Activated CD4-positive, alpha-beta T cell treated with anti-CD3 and anti-CD28 coated beads for 36 hours (primary cell): ENCODE measurements at regions of chr5 and their contacts with region 1.

Region 1: DNA sequence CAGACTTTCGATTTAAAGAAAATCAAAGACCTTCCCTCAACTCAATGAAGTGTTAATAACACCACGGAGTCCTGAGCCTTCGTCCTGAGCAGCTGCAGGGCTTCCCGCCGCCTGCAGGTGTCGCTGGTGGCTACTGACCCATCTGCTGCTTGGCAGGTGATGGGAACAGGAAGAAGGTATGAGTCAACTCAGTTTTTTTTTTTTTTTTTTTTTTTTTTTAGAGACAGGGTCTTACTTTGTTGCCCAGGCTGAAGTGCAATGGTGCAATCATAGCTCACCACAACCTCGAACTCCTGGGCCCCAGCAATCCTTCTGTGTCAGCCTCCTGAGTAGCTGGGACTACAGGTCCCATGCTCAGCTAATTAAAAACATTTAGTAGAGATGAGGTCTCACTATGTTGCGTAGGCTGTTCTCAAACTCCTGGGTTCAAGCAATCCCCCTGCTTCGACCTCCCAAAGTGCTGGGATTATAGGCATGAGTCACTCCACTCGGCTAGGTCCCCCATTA is 185.7 kb upstream of the IL12B start:
- DNase-seq: peak; percentile 89
- ATAC-seq: peak; percentile 98
- H3K4me3 Mint-ChIP-seq: no peak overlapping the region
- H3K27ac Mint-ChIP-seq: no peak overlapping the region
- H3K4me1 Mint-ChIP-seq: peaks cover 9% of the 10 kb centered on the region
- H3K27me3 Mint-ChIP-seq: peaks cover 10% of the 10 kb centered on the region

Region 2: DNA sequence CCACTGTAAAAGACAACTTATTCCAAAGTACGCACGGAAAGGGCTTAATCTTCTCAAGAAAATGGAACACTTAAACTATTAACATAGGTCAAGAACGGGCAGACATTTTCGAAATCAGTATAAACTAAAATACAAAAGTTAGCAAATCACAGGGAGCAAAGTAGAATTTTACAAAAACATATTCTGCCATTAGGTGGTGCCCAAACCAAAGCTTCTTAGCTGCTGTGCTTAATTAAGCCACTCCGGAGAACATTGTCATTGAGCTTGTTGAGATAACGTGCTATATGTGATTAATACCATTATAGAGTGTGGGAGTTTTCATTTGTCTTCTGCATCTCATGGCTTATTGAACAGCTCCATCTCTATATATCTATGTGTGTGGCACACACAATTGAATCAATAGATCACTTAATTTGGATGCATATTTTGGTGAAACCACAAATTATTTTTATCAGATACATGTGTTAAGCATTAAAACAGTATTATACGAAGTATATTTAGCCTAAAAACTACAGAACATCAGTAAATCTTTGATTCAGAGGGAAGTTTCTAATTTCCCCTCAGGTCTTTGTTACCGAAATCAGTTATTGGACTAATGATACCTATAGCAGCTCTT is 229.4 kb before region 1 on chr5:
- CTCF ChIA-PET with region 1: interaction called, 3 read pairs
- POLR2A ChIA-PET with region 1: no interaction called
- intact Hi-C with region 1: loop called in 1 of 2 experiments (anchors 5 kb)
- DNase-seq: no peak
- ATAC-seq: peak; percentile 63
- H3K4me3 Mint-ChIP-seq: no peak overlapping the region
- H3K27ac Mint-ChIP-seq: no peak overlapping the region
- H3K4me1 Mint-ChIP-seq: no peaks in the 10 kb centered on the region
- H3K27me3 Mint-ChIP-seq: no peaks in the 10 kb centered on the region

Region 3: GRCh38 chr5:159331093-159331973 is 184.6 kb before region 1 on chr5:
- CTCF ChIA-PET with region 1: interaction called, 5 read pairs
- POLR2A ChIA-PET with region 1: no interaction called
- intact Hi-C with region 1: loop called in 1 of 2 experiments (anchors 5 kb)
- DNase-seq: peak; percentile 86
- ATAC-seq: peak; percentile 96
- H3K4me3 Mint-ChIP-seq: peak overlapping the region; percentile 62
- H3K27ac Mint-ChIP-seq: peak overlapping the region; percentile 76
- H3K4me1 Mint-ChIP-seq: peaks cover 15% of the 10 kb centered on the region
- H3K27me3 Mint-ChIP-seq: peaks cover 2% of the 10 kb centered on the region

Region 4: DNA sequence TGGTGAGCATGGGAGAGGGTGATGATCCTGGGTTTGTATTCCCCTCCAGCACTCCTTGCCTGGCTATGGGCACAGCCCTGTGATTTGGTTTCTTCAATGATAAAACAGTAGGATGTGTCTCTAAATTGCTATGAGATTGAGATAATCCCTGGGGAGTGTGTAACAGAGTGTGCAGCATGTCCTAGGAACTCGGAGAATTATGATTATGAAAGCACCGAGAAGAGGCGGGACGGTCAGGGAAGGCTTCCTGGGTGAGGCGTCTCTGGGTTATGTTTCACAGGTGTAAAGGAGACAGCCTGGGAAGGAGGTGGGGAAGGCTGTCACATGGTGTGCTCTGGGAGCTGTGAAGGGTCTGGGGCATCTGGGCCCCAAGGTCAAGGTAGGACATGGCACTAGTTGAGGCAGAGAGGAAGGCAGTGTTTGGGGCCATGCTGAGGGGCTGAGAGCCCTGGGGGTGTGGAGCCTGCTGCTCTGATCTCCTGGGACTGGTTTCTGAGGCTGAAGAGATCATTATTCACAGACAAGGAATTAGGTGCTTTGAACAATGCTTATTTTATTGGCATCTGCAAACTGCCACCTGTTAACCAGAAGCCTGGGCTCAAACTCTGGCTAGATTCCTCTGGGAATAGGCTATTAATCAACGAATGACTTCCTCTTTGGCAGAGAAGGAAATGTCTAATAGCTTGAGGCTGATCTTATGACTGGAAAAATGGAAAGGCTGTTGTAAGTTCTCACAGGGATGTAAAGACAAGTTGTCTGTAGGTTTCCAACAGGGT is 111.9 kb before region 1 on chr5:
- CTCF ChIA-PET with region 1: no interaction called
- POLR2A ChIA-PET with region 1: no interaction called
- intact Hi-C with region 1: no loop called
- DNase-seq: no peak
- ATAC-seq: no peak
- H3K4me3 Mint-ChIP-seq: no peak overlapping the region
- H3K27ac Mint-ChIP-seq: no peak overlapping the region
- H3K4me1 Mint-ChIP-seq: peaks cover 3% of the 10 kb centered on the region
- H3K27me3 Mint-ChIP-seq: peaks cover 31% of the 10 kb centered on the region

Region 5: GRCh38 chr5:159444441-159445082 is 71.4 kb before region 1 on chr5:
- CTCF ChIA-PET with region 1: interaction called, 3 read pairs
- POLR2A ChIA-PET with region 1: no interaction called
- intact Hi-C with region 1: loop called in 1 of 2 experiments (anchors 2 kb)
- DNase-seq: no peak
- ATAC-seq: peak; percentile 58
- H3K4me3 Mint-ChIP-seq: no peak overlapping the region
- H3K27ac Mint-ChIP-seq: no peak overlapping the region
- H3K4me1 Mint-ChIP-seq: no peaks in the 10 kb centered on the region
- H3K27me3 Mint-ChIP-seq: peaks cover 15% of the 10 kb centered on the region

Region 6: DNA sequence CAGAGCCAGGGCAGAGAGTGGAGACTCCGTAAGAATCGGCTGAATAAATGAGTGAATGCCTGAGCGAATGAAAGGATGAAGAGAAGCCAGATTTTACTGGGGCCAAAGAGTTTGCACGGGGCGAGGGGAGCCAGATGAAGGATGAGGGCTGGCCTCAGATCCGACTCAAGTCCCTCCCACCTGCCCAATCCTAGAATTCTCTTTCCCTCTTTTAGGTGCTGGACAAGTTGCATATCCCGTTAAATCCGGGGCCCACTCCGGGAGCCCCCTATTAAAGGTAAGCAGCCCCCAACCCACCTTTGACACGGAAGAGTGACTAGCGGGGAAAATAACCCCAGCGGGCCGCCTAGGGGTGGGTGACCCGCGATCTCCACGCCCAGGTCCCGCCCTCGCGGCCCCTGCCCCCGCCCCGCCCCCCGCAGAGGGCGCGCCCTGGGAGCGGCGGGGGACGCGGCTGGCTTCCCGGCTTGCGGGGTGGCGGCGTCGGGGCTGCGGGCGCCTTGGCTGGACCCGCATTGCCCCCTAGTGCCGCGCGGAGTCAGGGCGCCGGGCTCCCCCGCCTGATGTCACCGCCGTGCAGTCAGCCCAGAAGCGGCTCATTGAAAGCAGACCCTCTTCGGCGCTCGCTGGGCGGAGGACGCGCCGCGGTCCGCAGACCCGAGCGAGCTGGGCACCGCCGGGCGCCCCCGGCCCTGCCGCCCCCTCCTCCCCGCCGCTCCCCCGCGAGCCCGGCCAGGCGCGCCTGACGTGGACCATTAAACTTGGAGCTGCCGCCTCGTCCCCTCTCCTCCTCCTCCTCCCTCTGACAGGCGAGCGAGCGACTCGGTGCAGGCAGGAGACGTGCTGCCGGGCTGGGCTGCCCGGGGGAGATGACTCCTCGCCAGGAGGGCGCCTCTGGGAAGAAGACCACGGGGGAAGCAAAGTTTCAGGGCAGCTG is 400.2 kb after region 1 on chr5 and contains the start of gene ADRA1B:
- CTCF ChIA-PET with region 1: interaction called, 4 read pairs
- POLR2A ChIA-PET with region 1: no interaction called
- intact Hi-C with region 1: loop called (anchors 1 kb)
- DNase-seq: peak; percentile 76
- ATAC-seq: peak; percentile 96
- H3K4me3 Mint-ChIP-seq: peak within 1 kb of the TSS; percentile 5
- H3K27ac Mint-ChIP-seq: no peak within 1 kb of the TSS
- H3K4me1 Mint-ChIP-seq: peaks cover 6% of the 10 kb centered on the region
- H3K27me3 Mint-ChIP-seq: peaks cover 46% of the 10 kb centered on the region
- total RNA-seq, gene ADRA1B: not detected

Region 7: GRCh38 chr5:159965031-159965837 is 449.3 kb after region 1 on chr5:
- CTCF ChIA-PET with region 1: no interaction called
- POLR2A ChIA-PET with region 1: no interaction called
- intact Hi-C with region 1: loop called in 1 of 2 experiments (anchors 1 kb)
- DNase-seq: peak; percentile 62
- ATAC-seq: no peak
- H3K4me3 Mint-ChIP-seq: no peak overlapping the region
- H3K27ac Mint-ChIP-seq: no peak overlapping the region
- H3K4me1 Mint-ChIP-seq: no peaks in the 10 kb centered on the region
- H3K27me3 Mint-ChIP-seq: peaks cover 20% of the 10 kb centered on the region